ENCODE measurements at regions of chr6 and their contacts with region 1.

Region 1: GRCh38 chr6:152124429-152125074 is 317.1 kb downstream of the ESR1 start:
- DNase-seq: no peak
- H3K4me3 ChIP-seq: no peak overlapping the region
- H3K27ac ChIP-seq: peak overlapping the region; percentile 86
- H3K4me1 ChIP-seq: peaks cover 63% of the 10 kb centered on the region
- H3K27me3 ChIP-seq: no peaks in the 10 kb centered on the region
- CTCF ChIP-seq: peak; percentile 84

Region 2: GRCh38 chr6:151647976-151648639 is 476.4 kb before region 1 on chr6:
- intact Hi-C with region 1: no loop called
- DNase-seq: no peak
- H3K4me3 ChIP-seq: no peak overlapping the region
- H3K27ac ChIP-seq: no peak overlapping the region
- H3K4me1 ChIP-seq: no peaks in the 10 kb centered on the region
- H3K27me3 ChIP-seq: peaks cover 17% of the 10 kb centered on the region
- CTCF ChIP-seq: no peak

Region 3: GRCh38 chr6:151690768-151691562 is 433.6 kb before region 1 on chr6:
- intact Hi-C with region 1: loop called (anchors 10 kb)
- DNase-seq: no peak
- H3K4me3 ChIP-seq: peak overlapping the region; percentile 55
- H3K27ac ChIP-seq: peak overlapping the region; percentile 77
- H3K4me1 ChIP-seq: no peaks in the 10 kb centered on the region
- H3K27me3 ChIP-seq: peaks cover 14% of the 10 kb centered on the region
- CTCF ChIP-seq: no peak

Region 4: GRCh38 chr6:151765444-151765886 is 359.1 kb before region 1 on chr6:
- intact Hi-C with region 1: loop called (anchors 5 kb)
- DNase-seq: no peak
- H3K4me3 ChIP-seq: no peak overlapping the region
- H3K27ac ChIP-seq: no peak overlapping the region
- H3K4me1 ChIP-seq: peaks cover 17% of the 10 kb centered on the region
- H3K27me3 ChIP-seq: no peaks in the 10 kb centered on the region
- CTCF ChIP-seq: peak; percentile 85

Region 5: GRCh38 chr6:152049502-152049901 is 75.0 kb before region 1 on chr6:
- intact Hi-C with region 1: no loop called
- DNase-seq: no peak
- H3K4me3 ChIP-seq: no peak overlapping the region
- H3K27ac ChIP-seq: no peak overlapping the region
- H3K4me1 ChIP-seq: no peaks in the 10 kb centered on the region
- H3K27me3 ChIP-seq: peaks cover 3% of the 10 kb centered on the region
- CTCF ChIP-seq: no peak